OCI-LY7 (cell line): ENCODE measurements at regions of chr1 and their contacts with region 1.

Region 1: GRCh38 chr1:182677397-182678098 is 6.8 kb downstream of the RGS8 start:
- DNase-seq: peak; percentile 91
- H3K4me3 ChIP-seq: peak overlapping the region; percentile 60
- H3K27ac ChIP-seq: peak overlapping the region; percentile 84
- H3K4me1 ChIP-seq: peaks cover 88% of the 10 kb centered on the region
- CTCF ChIP-seq: no peak

Region 2: GRCh38 chr1:181743878-181744312 is 933.7 kb before region 1 on chr1:
- CTCF ChIA-PET with region 1: no interaction called
- POLR2A ChIA-PET with region 1: no interaction called
- intact Hi-C with region 1: no loop called
- DNase-seq: no peak
- H3K4me3 ChIP-seq: no peak overlapping the region
- H3K27ac ChIP-seq: no peak overlapping the region
- H3K4me1 ChIP-seq: no peaks in the 10 kb centered on the region
- CTCF ChIP-seq: no peak

Region 3: GRCh38 chr1:182604169-182605164 is 73.1 kb before region 1 on chr1 and contains the start of gene RGS16:
- CTCF ChIA-PET with region 1: interaction called, 6 read pairs
- POLR2A ChIA-PET with region 1: interaction called, 69 read pairs
- intact Hi-C with region 1: loop called (anchors 1 kb)
- DNase-seq: peak; percentile 96
- H3K4me3 ChIP-seq: peak within 1 kb of the TSS; percentile 80
- H3K27ac ChIP-seq: peak within 1 kb of the TSS; percentile 47
- H3K4me1 ChIP-seq: peaks cover 59% of the 10 kb centered on the region
- CTCF ChIP-seq: no peak
- total RNA-seq, gene RGS16: 17.9 and 20.1 TPM in 2 replicates

Region 4: GRCh38 chr1:182620924-182621585 is 56.5 kb before region 1 on chr1:
- CTCF ChIA-PET with region 1: interaction called, 9 read pairs
- POLR2A ChIA-PET with region 1: interaction called, 12 read pairs
- intact Hi-C with region 1: no loop called
- DNase-seq: no peak
- H3K4me3 ChIP-seq: no peak overlapping the region
- H3K27ac ChIP-seq: no peak overlapping the region
- H3K4me1 ChIP-seq: peaks cover 77% of the 10 kb centered on the region
- CTCF ChIP-seq: no peak

Region 5: GRCh38 chr1:182649041-182649440 is 28.5 kb before region 1 on chr1:
- CTCF ChIA-PET with region 1: interaction called, 6 read pairs
- POLR2A ChIA-PET with region 1: interaction called, 32 read pairs
- intact Hi-C with region 1: loop called (anchors 1 kb)
- DNase-seq: peak; percentile 45
- H3K4me3 ChIP-seq: peak overlapping the region; percentile 35
- H3K27ac ChIP-seq: peak overlapping the region; percentile 53
- H3K4me1 ChIP-seq: peaks cover 71% of the 10 kb centered on the region
- CTCF ChIP-seq: 0 out of 2 replicates have a peak, but pooled peaks have one; percentile 30

Region 6: GRCh38 chr1:182781841-182782586 is 104.5 kb after region 1 on chr1:
- CTCF ChIA-PET with region 1: interaction called, 7 read pairs
- POLR2A ChIA-PET with region 1: interaction called, 6 read pairs
- intact Hi-C with region 1: loop called (anchors 1 kb)
- DNase-seq: peak; percentile 86
- H3K4me3 ChIP-seq: no peak overlapping the region
- H3K27ac ChIP-seq: no peak overlapping the region
- H3K4me1 ChIP-seq: peaks cover 31% of the 10 kb centered on the region
- CTCF ChIP-seq: peak; percentile 98